Naive thymus-derived CD4-positive, alpha-beta T cell (primary cell): ENCODE measurements at regions of chr11 and their contacts with region 1.

Region 1: DNA sequence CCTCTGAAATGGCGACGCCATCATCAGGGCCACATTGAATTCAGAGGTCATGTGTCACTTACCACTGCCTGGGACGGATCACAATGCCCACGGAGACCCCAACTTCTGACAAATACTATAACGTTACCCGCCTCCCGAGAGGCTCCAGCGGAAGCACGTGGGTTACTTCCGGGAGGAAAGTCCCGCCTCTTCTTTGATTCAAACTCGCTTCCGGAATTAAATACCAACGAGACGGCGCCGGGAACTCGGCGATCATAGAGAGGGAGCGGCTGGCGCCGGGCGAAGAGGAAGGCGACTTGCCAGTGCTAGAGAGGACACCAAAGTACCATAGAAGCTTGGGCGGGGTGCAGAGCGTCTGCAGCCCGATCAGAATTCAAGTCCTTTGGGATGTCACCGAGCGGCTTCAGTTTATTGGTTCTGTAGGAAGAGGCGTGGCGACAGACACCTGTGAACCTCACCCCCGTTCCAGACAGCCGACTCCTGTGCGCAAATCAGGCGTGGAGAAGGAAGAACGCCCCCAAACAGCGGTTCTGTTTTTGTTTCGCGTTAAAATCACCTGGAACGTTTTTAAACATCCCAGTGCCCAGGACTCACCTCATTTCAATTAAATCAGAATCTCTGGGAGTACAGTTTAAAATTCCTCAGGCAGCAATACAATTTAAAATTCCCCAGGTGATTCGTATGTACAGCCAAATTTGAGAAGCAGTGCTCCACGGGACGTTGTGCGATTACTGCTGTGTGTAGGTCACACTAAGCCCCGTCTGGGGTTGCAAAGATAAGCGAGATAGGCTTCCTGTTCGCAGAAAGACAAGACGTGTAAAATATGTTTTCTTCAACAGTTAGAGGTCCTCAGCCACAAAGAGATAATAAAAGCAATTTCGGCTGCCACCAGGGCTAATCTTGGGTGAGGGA is at the start of gene TIMM10:
- DNase-seq: peak; percentile 71 to 98 (median 95)
- ATAC-seq: peak; percentile 95
- H3K4me3 ChIP-seq: peak within 1 kb of the TSS; percentile 73
- H3K4me3 Mint-ChIP-seq: peak within 1 kb of the TSS; percentile 86 to 95 (median 91)
- H3K27ac ChIP-seq: peak within 1 kb of the TSS; percentile 91
- H3K27ac Mint-ChIP-seq: peak within 1 kb of the TSS; percentile 87 to 98 (median 95)
- H3K4me1 ChIP-seq: peaks cover 15 to 17% of the 10 kb centered on the region in 2 donors
- H3K4me1 Mint-ChIP-seq: peaks cover 6 to 43% (median 33%) of the 10 kb centered on the region in 7 donors
- H3K27me3 ChIP-seq: no peaks in the 10 kb centered on the region
- H3K27me3 Mint-ChIP-seq: no peaks in the 10 kb centered on the region
- total RNA-seq, gene TIMM10: 23.7 to 52.8 (median 34.7) TPM

Region 2: DNA sequence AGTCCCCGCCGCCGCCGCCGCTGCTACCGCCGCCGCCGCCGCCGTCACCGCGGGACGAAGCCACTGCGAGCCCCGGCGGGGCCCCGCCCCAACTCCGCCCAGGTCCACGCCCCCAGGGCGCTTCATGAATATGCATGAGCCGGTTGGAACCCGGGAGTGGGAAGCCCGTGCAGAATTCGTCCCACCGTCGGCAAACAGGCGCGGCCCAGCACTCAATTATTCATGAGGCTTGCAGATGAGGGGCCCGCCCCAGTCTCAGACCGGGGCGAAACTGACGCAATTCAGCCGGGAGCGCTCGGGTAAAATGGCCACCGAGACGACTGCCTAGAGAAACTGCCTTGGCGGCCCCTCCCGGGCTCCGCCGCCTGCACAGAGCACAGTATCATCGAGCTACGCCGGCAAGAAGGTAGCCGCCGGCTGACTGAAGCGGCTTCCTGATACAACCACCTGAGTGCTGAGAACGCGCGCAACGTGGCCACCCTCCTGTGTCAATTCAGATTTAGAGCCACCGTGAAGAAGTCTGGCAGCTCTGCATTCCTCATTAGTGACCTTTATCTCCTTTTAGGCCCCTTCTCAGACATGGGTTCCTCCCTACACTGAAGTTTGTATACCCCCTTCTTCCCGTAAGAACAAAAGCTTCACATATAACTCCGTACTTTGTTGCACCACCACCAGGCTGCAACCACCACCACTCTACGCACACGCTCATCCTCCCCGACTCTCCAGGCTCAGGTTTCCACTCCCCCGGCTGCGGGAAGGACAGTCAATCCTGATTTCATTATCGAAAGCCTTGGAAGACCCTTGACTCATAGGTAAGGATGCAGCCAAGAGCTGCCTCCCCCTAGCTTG is 205.7 kb before region 1 on chr11 and contains the start of gene TNKS1BP1:
- CTCF ChIA-PET with region 1: interaction called, 3 read pairs
- POLR2A ChIA-PET with region 1: interaction called, 8 read pairs
- intact Hi-C with region 1: loop called in 1 of 2 experiments (anchors 1 kb)
- DNase-seq: peak; percentile 84 to 92 (median 90)
- ATAC-seq: peak; percentile 91
- H3K4me3 ChIP-seq: peak within 1 kb of the TSS; percentile 73
- H3K4me3 Mint-ChIP-seq: peak within 1 kb of the TSS; percentile 88 to 95 (median 91)
- H3K27ac ChIP-seq: peak within 1 kb of the TSS; percentile 79
- H3K27ac Mint-ChIP-seq: peak within 1 kb of the TSS; percentile 93 to 98 (median 95)
- H3K4me1 ChIP-seq: peaks cover 8 to 14% of the 10 kb centered on the region in 2 donors
- H3K4me1 Mint-ChIP-seq: peaks cover 30 to 58% (median 51%) of the 10 kb centered on the region in 7 donors
- H3K27me3 ChIP-seq: no peaks in the 10 kb centered on the region
- H3K27me3 Mint-ChIP-seq: no peaks in the 10 kb centered on the region
- total RNA-seq, gene TNKS1BP1: 11.2 to 22.0 (median 15.9) TPM

Region 3: DNA sequence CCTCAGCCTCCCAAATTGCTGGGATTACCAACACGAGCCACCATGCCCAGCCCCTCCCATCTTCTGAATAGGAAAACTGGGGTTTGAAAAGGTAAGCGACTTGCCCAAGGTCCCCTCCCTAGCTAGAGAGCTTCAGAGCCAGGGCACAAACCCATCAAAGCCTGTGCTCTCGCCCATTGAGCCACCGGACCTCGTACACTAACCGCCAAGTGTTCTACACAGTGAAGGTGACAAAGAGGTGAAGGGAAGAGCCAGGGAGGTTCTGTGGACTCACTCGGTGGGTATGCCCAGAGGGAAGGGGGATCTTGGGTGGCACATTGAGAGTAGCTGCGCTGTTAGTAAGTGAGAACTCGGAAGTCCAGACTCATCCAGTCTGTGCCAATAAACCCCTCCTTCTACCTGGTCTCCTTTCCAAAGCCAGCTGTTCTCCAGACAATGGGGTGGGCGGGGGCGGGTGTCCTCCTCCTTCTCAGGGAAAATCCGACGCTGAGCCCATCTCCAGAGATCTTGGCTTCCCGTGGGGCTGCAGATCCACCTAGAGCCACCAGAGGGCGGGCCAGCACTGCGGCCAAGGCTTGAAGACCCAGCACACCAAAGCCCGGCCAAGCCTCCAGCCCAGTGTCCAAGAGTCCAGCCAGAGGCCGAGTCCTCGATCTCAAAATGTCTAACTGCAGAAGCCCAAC is 73.8 kb before region 1 on chr11:
- CTCF ChIA-PET with region 1: interaction called, 107 read pairs
- POLR2A ChIA-PET with region 1: interaction called, 6 read pairs
- intact Hi-C with region 1: loop called (anchors 1 kb)
- DNase-seq: peak; percentile 41 to 77 (median 62)
- ATAC-seq: peak; percentile 83
- H3K4me3 ChIP-seq: no peak overlapping the region
- H3K4me3 Mint-ChIP-seq: peak overlapping the region; percentile 54 to 99 (median 74)
- H3K27ac ChIP-seq: no peak overlapping the region
- H3K27ac Mint-ChIP-seq: peak overlapping the region in 1 of 9 donors; percentile 83
- H3K4me1 ChIP-seq: peaks cover 26% of the 10 kb centered on the region in 2 donors
- H3K4me1 Mint-ChIP-seq: peaks cover 17 to 33% (median 26%) of the 10 kb centered on the region in 7 donors
- H3K27me3 ChIP-seq: peaks cover 12% of the 10 kb centered on the region in 2 donors
- H3K27me3 Mint-ChIP-seq: peaks cover 22 to 56% (median 32%) of the 10 kb centered on the region in 5 donors

Region 4: DNA sequence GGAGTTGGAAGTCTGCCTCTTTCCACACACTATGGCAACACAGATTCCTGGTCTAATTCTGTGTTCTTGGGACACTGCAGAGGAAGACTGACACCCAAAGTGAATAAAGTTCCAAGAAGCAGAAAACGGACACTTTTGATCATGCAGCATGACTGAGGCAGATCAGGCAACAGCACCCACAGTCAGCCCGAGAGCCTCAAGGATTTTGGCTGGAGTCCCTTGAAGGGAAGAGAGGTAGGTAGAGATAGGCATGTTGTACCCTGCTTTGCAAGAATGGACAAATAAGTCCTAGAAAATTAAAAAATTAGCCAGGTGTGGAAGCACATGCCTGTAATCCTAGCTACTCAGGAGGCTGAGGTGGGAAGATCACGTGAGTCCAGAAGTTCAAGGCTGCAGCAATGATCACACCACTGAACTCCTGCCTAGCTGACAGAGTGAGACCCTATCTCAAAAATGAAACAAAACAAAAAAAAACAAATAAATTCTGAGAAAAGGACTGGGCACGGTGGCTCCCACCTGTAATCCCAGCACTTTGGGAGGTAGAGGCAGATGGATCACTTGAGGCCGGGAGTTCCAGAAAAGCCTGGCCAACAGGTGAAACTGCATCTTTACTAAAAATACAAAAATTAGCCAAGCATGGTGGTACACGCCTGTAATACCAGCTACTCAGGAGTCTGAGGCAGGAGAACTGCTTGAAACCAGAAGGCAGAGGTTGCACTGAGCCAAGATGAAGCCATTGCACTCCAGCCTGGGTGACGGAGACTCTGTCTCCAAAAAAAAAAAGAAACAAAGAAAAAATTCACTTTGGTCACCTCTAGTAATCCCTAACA is 22.3 kb before region 1 on chr11:
- CTCF ChIA-PET with region 1: interaction called, 21 read pairs
- POLR2A ChIA-PET with region 1: no interaction called
- intact Hi-C with region 1: no loop called
- DNase-seq: no peak
- ATAC-seq: no peak
- H3K4me3 ChIP-seq: no peak overlapping the region
- H3K4me3 Mint-ChIP-seq: no peak overlapping the region
- H3K27ac ChIP-seq: no peak overlapping the region
- H3K27ac Mint-ChIP-seq: no peak overlapping the region
- H3K4me1 ChIP-seq: peaks cover 0 to 2% of the 10 kb centered on the region in 2 donors
- H3K4me1 Mint-ChIP-seq: peaks cover 16 to 28% (median 23%) of the 10 kb centered on the region in 7 donors
- H3K27me3 ChIP-seq: no peaks in the 10 kb centered on the region
- H3K27me3 Mint-ChIP-seq: no peaks in the 10 kb centered on the region

Region 5: GRCh38 chr11:57657194-57658022 is 126.6 kb after region 1 on chr11 and contains the start of gene CLP1:
- CTCF ChIA-PET with region 1: interaction called, 3 read pairs
- POLR2A ChIA-PET with region 1: interaction called, 3 read pairs
- intact Hi-C with region 1: loop called (anchors 1 kb)
- DNase-seq: peak; percentile 87 to 99 (median 98)
- ATAC-seq: peak; percentile 99
- H3K4me3 ChIP-seq: peak within 1 kb of the TSS; percentile 64
- H3K4me3 Mint-ChIP-seq: peak within 1 kb of the TSS; percentile 89 to 100 (median 94)
- H3K27ac ChIP-seq: peak within 1 kb of the TSS; percentile 92
- H3K27ac Mint-ChIP-seq: peak within 1 kb of the TSS; percentile 88 to 98 (median 94)
- H3K4me1 ChIP-seq: peaks cover 4 to 10% of the 10 kb centered on the region in 2 donors
- H3K4me1 Mint-ChIP-seq: peaks cover 8 to 45% (median 36%) of the 10 kb centered on the region in 7 donors
- H3K27me3 ChIP-seq: no peaks in the 10 kb centered on the region
- H3K27me3 Mint-ChIP-seq: no peaks in the 10 kb centered on the region
- total RNA-seq, gene CLP1: 12.8 to 18.5 (median 14.7) TPM

Region 6: GRCh38 chr11:57792060-57792541 is 261.2 kb after region 1 on chr11:
- CTCF ChIA-PET with region 1: no interaction called
- POLR2A ChIA-PET with region 1: no interaction called
- intact Hi-C with region 1: loop called in 1 of 2 experiments (anchors 1 kb)
- DNase-seq: peak; percentile 69 to 93 (median 90)
- ATAC-seq: peak; percentile 96
- H3K4me3 ChIP-seq: peak overlapping the region; percentile 15
- H3K4me3 Mint-ChIP-seq: peak overlapping the region; percentile 55 to 88 (median 77)
- H3K27ac ChIP-seq: peak overlapping the region; percentile 83
- H3K27ac Mint-ChIP-seq: peak overlapping the region; percentile 90 to 99 (median 99)
- H3K4me1 ChIP-seq: peaks cover 21 to 29% of the 10 kb centered on the region in 2 donors
- H3K4me1 Mint-ChIP-seq: peaks cover 37 to 53% (median 44%) of the 10 kb centered on the region in 7 donors
- H3K27me3 ChIP-seq: no peaks in the 10 kb centered on the region
- H3K27me3 Mint-ChIP-seq: peaks cover 0 to 2% (median 0%) of the 10 kb centered on the region in 5 donors